ENCODE measurements at regions of chr5 and their contacts with region 1.

Region 1: DNA sequence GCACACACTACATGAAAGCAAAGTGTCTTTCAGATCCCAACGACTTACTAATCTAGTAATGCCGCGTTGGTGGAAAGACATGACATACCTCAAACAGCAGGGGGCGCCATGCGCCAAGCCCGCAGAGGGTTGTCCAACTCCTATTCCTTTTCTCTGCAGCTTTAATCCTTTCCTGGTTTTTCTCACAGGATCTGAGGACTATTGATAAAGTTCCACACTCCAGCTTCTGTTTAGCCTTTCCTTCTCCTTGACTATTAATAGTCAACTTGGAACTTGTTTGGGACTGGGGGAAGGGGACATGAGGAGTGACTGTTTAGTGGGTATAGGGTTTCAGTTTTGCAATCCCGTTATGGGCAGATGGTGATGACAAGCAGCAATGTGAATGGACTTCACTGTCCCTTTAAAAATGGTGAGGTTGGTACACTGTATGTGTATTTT is 62.9 kb downstream of the OTULIN start:
- DNase-seq: peak; percentile 63 to 81 (median 72)
- H3K4me3 ChIP-seq: no peak overlapping the region
- H3K27ac ChIP-seq: no peak overlapping the region
- H3K4me1 ChIP-seq: peaks cover 0 to 12% (median 8%) of the 10 kb centered on the region in 4 experiments
- H3K27me3 ChIP-seq: no peaks in the 10 kb centered on the region

Region 2: DNA sequence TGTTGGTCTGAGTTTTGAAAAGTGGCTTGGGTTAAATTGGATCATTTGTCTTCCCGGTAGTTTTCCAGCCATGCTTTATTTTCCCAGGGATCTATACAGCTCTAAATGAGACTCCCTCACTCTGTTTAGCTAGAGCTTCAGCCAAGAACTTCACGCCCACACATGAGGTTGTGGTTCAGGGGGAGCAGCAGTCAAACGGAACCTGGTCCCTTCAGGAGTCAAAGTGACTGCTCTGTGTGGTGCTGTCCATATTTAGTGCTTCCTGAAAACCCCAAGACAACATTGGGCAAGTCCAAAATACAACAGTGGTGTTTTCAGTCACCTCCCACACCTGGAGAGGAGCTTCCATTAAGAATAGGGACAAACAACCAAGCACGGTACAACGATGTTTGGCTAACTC is 53.7 kb after region 1 on chr5:
- CTCF ChIA-PET with region 1: interaction called, 12 read pairs
- POLR2A ChIA-PET with region 1: no interaction called
- DNase-seq: no peak
- H3K4me3 ChIP-seq: no peak overlapping the region
- H3K27ac ChIP-seq: no peak overlapping the region
- H3K4me1 ChIP-seq: no peaks in the 10 kb centered on the region
- H3K27me3 ChIP-seq: no peaks in the 10 kb centered on the region

Region 3: GRCh38 chr5:14794583-14795230 is 67.3 kb after region 1 on chr5:
- CTCF ChIA-PET with region 1: no interaction called
- POLR2A ChIA-PET with region 1: no interaction called
- DNase-seq: peak; percentile 19 to 91 (median 82)
- H3K4me3 ChIP-seq: no peak overlapping the region
- H3K27ac ChIP-seq: no peak overlapping the region
- H3K4me1 ChIP-seq: peaks cover 4 to 18% (median 8%) of the 10 kb centered on the region in 4 experiments
- H3K27me3 ChIP-seq: no peaks in the 10 kb centered on the region

Region 4: DNA sequence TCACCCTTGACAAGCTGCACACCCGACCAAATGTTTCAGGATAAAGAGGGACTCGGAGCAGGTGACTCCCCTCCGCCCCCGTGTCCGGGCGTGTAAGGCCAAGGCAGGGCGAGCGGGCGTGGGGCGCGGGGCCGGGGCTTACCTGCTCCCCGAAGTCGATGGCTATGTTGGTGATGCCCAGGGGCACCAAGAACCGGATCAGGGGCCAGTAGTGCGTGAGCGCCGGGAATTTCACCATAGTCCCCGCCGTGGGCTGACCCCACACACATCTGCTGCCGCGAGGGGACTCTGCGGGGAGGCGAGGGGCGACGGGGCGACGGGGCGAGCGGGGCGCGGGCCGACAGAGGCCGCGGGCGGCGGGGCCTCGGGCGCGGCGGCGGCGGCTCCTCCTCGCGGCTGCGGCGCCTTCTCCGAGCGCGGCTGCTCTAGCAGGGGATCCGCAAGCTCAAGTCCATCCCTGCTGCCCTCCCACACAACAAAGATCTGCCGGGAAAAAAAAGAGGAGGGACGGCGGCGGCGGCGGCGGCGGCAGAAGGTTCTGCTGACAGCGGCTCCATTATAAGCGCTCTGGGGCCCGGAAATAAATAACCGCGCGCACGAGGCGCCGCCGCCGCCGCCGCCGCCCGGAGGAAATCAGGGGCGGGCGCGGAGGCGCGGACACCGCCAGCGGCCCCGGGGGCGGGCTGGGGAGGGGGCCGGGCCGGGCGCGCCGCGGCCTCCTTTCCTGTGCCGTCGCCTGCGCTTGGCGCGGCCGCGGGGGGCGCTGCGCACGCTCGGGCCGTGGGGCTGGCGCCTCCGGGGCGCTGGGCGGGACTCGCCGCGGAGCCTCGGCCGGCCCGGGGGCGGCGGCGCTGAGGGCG is 144.0 kb after region 1 on chr5 and contains the start of gene ANKH:
- CTCF ChIA-PET with region 1: interaction called, 10 read pairs
- POLR2A ChIA-PET with region 1: no interaction called
- DNase-seq: peak; percentile 70 to 88 (median 85)
- H3K4me3 ChIP-seq: peak within 1 kb of the TSS; percentile 57 to 87 (median 74)
- H3K27ac ChIP-seq: no peak within 1 kb of the TSS
- H3K4me1 ChIP-seq: peaks cover 5 to 28% (median 23%) of the 10 kb centered on the region in 4 experiments
- H3K27me3 ChIP-seq: peaks cover 0 to 2% (median 2%) of the 10 kb centered on the region in 5 experiments

Region 5: GRCh38 chr5:15013654-15014463 is 286.4 kb after region 1 on chr5:
- CTCF ChIA-PET with region 1: interaction called, 34 read pairs
- POLR2A ChIA-PET with region 1: no interaction called
- DNase-seq: peak; percentile 38 to 53 (median 47)
- H3K4me3 ChIP-seq: no peak overlapping the region
- H3K27ac ChIP-seq: no peak overlapping the region
- H3K4me1 ChIP-seq: peaks cover 0 to 1% (median 0%) of the 10 kb centered on the region in 4 experiments
- H3K27me3 ChIP-seq: peaks cover 0 to 1% (median 0%) of the 10 kb centered on the region in 5 experiments

Region 6: DNA sequence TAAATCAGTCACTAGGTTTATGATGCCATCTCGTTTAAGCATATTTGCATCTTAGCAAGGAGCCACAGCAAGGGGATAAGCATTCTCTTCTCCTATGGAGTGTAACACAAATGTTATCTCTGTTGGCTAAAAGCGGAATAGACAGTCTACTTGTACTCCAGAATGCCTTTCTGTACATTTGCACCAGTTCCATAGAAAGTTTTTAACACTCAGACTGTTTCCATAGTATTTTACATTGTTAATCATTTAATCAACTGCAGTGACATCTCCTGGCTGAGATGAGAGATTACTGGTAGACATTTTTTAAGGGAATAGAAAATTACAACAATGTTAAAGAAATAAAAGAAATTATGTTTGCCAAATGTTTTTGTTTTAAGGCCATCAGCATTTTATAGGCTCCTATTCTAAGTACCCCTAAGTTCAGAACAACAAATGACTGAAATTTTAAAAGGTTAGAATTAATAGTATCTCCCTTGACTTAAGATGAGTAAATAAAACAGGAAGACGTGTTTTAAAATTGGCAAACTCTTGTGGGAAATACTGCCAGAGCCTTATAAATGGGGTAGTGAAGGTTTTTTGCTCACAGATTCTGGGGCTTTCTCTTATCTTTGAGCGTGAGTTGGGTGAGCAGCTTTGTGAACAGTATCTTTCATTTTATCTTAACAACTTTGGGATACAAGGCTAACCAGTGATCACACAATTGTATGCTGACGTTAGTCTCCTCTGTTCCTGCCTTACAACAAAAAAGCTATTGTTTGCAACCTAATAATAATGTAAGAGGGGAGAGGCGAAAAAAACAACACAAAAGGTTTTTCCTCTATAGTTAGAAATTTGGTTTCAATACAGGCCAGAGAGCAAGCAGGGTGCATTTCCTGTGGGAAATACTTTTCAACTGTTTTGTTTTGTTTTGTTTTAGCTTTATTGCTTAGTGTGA is 1066.9 kb after region 1 on chr5:
- CTCF ChIA-PET with region 1: no interaction called
- POLR2A ChIA-PET with region 1: no interaction called
- DNase-seq: no peak
- H3K4me3 ChIP-seq: no peak overlapping the region
- H3K27ac ChIP-seq: no peak overlapping the region
- H3K4me1 ChIP-seq: no peaks in the 10 kb centered on the region
- H3K27me3 ChIP-seq: no peaks in the 10 kb centered on the region

Measured in common myeloid progenitor, CD34-positive (primary cell).